AG04450 (cell line): ENCODE measurements at regions of chr10 and their contacts with region 1.

Region 1: GRCh38 chr10:72692057-72692910 is at the start of gene MCU:
- DNase-seq: peak; percentile 86
- H3K4me3 ChIP-seq: peak within 1 kb of the TSS; percentile 88
- H3K27ac ChIP-seq: peak within 1 kb of the TSS; percentile 40
- H3K27me3 ChIP-seq: no peaks in the 10 kb centered on the region
- CTCF ChIP-seq: no peak
- polyA plus RNA-seq, gene MCU: 91.6 and 104 TPM in 2 replicates

Region 2: DNA sequence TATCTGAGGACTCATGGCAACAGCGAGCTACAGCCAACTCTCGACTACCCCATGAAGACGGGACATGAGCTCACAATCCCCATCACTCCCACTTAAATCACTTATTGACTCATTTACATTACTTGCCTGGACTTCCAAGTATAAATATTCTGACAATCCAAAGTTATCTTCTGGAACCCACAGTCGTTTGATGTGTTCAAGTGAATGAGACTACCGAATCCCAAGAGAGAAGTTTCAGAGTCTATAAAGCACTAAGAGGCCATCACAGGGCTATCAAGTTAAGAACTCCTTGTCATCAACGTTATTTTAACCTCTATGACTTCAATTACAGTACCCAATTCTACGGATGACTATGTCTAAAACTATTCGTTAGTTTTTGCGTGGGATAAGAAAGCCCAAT is 488.0 kb before region 1 on chr10:
- CTCF ChIA-PET with region 1: no interaction called
- POLR2A ChIA-PET with region 1: no interaction called
- DNase-seq: no peak
- H3K4me3 ChIP-seq: no peak overlapping the region
- H3K27ac ChIP-seq: no peak overlapping the region
- H3K27me3 ChIP-seq: no peaks in the 10 kb centered on the region
- CTCF ChIP-seq: no peak

Region 3: DNA sequence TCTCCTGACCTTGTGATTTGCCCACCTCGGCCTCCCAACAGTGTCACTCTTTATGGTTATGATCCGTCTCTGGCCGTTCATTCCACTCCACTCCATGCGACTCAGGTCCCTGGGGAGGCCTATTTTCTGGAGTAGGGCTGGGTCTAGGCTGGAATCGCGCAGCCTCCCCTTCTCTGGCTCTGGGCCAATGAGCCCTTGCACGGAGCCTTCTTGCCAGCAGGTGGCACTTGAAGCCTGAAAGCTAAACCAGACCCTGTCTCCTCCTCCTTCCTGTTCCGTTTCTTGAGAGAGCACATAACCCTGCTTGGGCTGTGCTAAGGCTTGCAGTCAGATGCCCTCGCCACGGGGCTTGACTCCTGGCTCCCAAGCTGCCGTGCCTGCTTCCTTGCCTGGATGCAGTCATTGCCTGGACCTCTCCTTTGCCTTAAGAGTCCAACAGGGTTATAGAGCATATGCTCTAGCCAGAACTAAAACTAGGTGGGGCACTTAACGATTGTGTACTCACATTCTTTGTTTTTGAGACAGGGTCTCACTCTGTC is 328.0 kb before region 1 on chr10:
- CTCF ChIA-PET with region 1: interaction called, 5 read pairs
- POLR2A ChIA-PET with region 1: interaction called, 10 read pairs
- DNase-seq: peak; percentile 88
- H3K4me3 ChIP-seq: no peak overlapping the region; the same call in 1 of the 2 replicates
- H3K27ac ChIP-seq: peak overlapping the region; percentile 95
- H3K27me3 ChIP-seq: no peaks in the 10 kb centered on the region
- CTCF ChIP-seq: peak; percentile 97

Region 4: GRCh38 chr10:72702868-72703581 is 10.7 kb after region 1 on chr10:
- CTCF ChIA-PET with region 1: interaction called, 3 read pairs
- POLR2A ChIA-PET with region 1: interaction called, 11 read pairs
- DNase-seq: no peak
- H3K4me3 ChIP-seq: no peak overlapping the region
- H3K27ac ChIP-seq: no peak overlapping the region
- H3K27me3 ChIP-seq: no peaks in the 10 kb centered on the region
- CTCF ChIP-seq: 0 out of 2 replicates have a peak, but pooled peaks have one; percentile 12

Region 5: DNA sequence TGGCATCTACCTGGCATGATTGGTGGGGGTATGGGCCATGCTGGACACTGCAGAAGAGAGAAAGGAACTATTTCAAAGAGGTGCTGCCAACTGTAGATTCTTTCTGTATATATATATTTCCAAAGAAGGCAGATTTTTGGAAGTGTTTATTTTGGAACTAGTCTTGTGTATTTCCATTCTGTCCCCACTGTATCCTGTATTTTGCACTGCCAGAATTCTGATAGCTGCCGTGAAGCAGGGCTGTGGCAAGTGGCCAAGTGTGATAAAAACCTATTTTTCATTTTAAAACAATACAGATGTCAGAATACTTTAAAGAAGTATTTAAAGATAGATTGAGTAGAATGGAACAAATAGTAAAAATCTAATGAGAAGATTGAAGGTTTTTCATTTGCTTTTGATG is 16.8 kb after region 1 on chr10:
- CTCF ChIA-PET with region 1: interaction called, 3 read pairs
- POLR2A ChIA-PET with region 1: interaction called, 15 read pairs
- DNase-seq: no peak
- H3K4me3 ChIP-seq: no peak overlapping the region
- H3K27ac ChIP-seq: no peak overlapping the region
- H3K27me3 ChIP-seq: no peaks in the 10 kb centered on the region
- CTCF ChIP-seq: no peak

Region 6: GRCh38 chr10:72756674-72757385 is 64.5 kb after region 1 on chr10:
- CTCF ChIA-PET with region 1: no interaction called
- POLR2A ChIA-PET with region 1: no interaction called
- DNase-seq: no peak
- H3K4me3 ChIP-seq: no peak overlapping the region
- H3K27ac ChIP-seq: no peak overlapping the region
- H3K27me3 ChIP-seq: no peaks in the 10 kb centered on the region
- CTCF ChIP-seq: no peak

Region 7: DNA sequence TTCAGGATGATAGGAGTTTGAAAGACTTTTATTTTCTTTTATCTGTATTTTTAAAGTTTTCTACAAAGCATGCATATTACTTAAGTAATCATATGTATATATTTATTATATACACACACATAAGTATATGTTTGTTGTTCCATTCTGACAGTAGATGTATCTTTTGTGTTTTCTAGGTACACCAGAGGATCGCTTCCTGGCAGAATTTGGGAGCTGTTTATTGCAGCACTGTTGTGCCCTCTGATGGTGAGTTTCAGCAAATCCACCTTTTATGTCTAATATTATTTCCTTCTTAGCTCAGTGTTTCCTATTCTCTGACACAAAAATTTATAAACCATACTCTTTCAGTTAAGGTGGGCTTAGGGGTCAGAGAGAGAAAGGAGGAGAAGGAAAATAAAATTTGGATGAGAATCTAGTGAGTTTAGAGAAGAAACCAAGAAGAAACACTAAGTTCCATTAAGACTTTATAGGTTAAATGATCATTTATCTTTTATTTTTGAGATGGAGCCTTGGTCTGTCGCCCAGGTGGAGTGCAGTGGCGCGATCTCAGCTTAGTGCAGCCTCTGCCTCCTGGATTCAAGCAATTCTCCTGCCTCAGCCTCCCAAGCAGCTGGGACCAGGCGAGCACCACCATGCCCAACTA is 142.0 kb after region 1 on chr10:
- CTCF ChIA-PET with region 1: interaction called, 20 read pairs
- POLR2A ChIA-PET with region 1: interaction called, 14 read pairs
- DNase-seq: peak; percentile 60
- H3K4me3 ChIP-seq: no peak overlapping the region
- H3K27ac ChIP-seq: no peak overlapping the region
- H3K27me3 ChIP-seq: no peaks in the 10 kb centered on the region
- CTCF ChIP-seq: peak; percentile 72